Ascending aorta (tissue), 2 donors: ENCODE measurements at regions of chr15 and their contacts with region 1.

Region 1: GRCh38 chr15:66700802-66701421 is 1.1 kb upstream of the SMAD6 start:
- DNase-seq: peak; percentile 89 to 98
- H3K4me3 ChIP-seq: peak overlapping the region; percentile 88
- H3K27ac ChIP-seq: peak overlapping the region; percentile 84 to 87
- H3K4me1 ChIP-seq: peaks cover 3 to 9% of the 10 kb centered on the region in 2 donors
- H3K27me3 ChIP-seq: no peaks in the 10 kb centered on the region
- CTCF ChIP-seq: no peak

Region 2: GRCh38 chr15:66566963-66567531 is 133.9 kb before region 1 on chr15:
- intact Hi-C with region 1: no loop called
- DNase-seq: peak in 1 of 2 donors; percentile 76
- H3K4me3 ChIP-seq: no peak overlapping the region
- H3K27ac ChIP-seq: no peak overlapping the region
- H3K4me1 ChIP-seq: no peaks in the 10 kb centered on the region
- H3K27me3 ChIP-seq: no peaks in the 10 kb centered on the region
- CTCF ChIP-seq: peak; percentile 34 to 71 (median 61)

Region 3: DNA sequence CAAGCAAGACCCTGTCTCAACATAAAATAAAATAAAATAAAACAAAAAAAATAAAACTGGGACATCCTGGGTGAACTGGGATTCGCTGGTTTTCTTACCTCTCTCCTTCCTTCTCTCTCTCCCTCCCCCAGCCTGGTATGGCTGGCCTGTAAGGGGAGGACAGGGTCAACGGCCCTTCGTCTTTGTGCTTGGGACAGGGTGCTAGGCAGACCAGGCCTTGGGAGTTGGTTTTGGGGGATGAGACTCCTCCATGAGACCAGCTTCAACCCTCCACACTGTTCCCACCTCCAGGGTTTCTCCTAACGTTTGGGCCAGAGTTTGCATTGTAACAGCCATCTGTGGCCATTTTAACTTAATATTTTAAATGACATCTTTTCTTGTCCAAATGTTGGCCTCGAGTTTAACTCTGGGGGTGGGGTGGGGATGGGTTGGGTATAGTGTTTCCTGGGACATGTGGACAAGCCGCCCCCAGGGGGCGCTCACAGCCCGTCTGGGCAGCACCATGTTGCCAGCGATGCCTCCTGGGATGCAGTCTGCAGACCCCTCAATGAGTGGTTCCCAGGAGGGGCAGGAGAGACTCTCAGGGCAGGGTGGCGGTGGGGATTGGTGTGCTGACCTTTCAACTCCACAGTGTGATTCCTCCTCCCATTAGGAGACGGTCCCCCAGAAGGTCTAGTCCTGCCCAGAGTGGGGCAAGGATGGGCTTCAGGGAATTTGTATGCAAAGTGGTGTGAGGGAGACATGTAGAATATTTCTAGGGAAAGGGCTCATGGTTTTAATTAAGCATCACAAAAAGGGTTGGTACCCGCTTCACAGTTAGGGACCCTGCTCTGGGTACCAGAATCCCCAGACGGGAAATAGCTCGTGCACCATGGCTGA is 97.4 kb before region 1 on chr15:
- intact Hi-C with region 1: loop called (anchors 2 kb)
- DNase-seq: peak in 1 of 2 donors; percentile 75
- H3K4me3 ChIP-seq: no peak overlapping the region
- H3K27ac ChIP-seq: no peak overlapping the region
- H3K4me1 ChIP-seq: peaks cover 0 to 3% of the 10 kb centered on the region in 2 donors
- H3K27me3 ChIP-seq: no peaks in the 10 kb centered on the region
- CTCF ChIP-seq: peak; percentile 78 to 90 (median 80)

Region 4: GRCh38 chr15:66720206-66721006 is 19.5 kb after region 1 on chr15:
- intact Hi-C with region 1: loop called (anchors 2 kb)
- DNase-seq: peak; percentile 71 to 94
- H3K4me3 ChIP-seq: no peak overlapping the region
- H3K27ac ChIP-seq: peak overlapping the region; percentile 88 to 96
- H3K4me1 ChIP-seq: peaks cover 25 to 56% of the 10 kb centered on the region in 2 donors
- H3K27me3 ChIP-seq: no peaks in the 10 kb centered on the region
- CTCF ChIP-seq: no peak

Region 5: DNA sequence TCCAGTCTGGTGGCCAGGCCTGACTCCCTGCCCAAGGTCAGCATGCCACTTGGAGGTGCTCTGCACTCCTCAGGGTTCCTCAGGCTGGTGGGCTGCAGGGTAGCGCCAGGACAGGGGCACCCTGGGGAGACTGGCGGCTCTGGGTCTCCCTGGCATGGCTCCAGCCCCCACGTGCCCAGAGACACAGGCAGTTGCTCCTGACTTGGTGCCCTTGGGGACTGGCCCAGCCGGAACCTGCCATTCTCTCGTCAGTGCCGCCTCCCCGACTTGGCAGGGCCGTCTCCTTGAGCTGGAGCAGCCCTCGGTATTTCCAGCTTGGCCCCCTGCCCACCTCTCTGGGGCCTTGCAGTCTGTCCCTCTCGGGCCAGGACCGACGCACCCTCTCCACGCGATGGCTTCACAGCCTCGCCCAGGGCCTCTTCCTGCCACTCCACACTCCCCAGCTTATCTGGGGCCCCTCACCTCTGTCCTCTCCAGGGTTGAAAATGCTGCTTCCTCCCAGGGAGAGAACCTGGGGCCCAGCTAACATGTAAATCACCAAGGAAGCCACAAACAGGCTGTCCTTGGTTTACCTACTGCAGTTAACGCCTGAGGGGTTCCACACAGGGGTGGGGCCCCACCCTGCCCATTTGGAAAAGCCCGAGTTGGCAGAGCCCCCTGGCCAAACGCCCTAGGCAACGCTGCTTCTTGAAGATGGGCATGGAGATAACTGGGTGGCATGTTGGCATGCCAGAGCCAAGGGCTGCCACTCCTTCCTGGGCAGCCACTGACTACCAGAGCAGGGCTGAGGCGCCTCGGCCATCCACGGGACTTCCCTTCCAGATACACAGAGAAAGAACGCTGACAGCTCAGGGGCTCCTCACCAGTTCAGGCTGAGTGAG is 62.5 kb after region 1 on chr15:
- intact Hi-C with region 1: loop called (anchors 2 kb)
- DNase-seq: peak; percentile 63 to 96
- H3K4me3 ChIP-seq: no peak overlapping the region
- H3K27ac ChIP-seq: peak overlapping the region; percentile 76 to 95
- H3K4me1 ChIP-seq: peaks cover 33 to 78% of the 10 kb centered on the region in 2 donors
- H3K27me3 ChIP-seq: no peaks in the 10 kb centered on the region
- CTCF ChIP-seq: no peak

Region 6: DNA sequence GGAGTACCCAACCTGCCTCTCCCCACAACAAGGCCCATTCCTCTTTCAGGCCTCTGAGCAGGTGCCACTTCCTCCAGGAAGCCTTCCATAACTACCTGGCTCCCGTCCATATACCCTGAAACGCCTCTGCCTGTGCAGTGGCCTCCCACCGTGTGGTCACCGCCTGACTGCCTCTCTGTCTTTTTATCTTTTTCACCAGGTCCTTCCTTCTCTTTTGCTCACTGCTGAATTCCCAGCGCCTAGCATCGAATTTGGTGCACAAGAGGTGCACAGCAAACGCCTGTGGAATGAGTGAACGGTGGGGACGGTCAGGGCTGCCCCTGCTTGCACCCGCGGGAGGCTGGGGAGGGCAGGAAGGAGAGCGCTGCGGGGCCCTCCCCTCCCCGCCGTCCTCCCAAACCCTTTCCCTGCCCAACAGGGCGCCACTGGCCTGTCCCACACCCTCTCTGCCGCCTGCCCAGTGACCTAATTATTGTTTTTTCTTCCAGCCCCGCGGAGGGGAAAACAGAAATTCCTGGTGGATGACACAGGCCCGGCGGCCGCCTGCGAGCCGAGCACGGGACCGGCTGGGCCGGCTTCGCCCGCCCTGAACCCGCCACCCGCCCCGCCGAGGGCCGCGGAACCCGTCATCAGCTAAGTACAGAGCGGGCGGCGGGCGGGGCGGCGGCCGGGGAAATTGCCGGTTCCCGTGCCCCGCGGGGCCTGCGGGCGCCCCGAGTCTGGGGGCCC is 141.2 kb after region 1 on chr15:
- intact Hi-C with region 1: loop called (anchors 2 kb)
- DNase-seq: peak; percentile 79 to 96
- H3K4me3 ChIP-seq: peak overlapping the region; percentile 57 to 60
- H3K27ac ChIP-seq: peak overlapping the region; percentile 89 to 95
- H3K4me1 ChIP-seq: peaks cover 21 to 40% of the 10 kb centered on the region in 2 donors
- H3K27me3 ChIP-seq: no peaks in the 10 kb centered on the region
- CTCF ChIP-seq: no peak

Region 7: DNA sequence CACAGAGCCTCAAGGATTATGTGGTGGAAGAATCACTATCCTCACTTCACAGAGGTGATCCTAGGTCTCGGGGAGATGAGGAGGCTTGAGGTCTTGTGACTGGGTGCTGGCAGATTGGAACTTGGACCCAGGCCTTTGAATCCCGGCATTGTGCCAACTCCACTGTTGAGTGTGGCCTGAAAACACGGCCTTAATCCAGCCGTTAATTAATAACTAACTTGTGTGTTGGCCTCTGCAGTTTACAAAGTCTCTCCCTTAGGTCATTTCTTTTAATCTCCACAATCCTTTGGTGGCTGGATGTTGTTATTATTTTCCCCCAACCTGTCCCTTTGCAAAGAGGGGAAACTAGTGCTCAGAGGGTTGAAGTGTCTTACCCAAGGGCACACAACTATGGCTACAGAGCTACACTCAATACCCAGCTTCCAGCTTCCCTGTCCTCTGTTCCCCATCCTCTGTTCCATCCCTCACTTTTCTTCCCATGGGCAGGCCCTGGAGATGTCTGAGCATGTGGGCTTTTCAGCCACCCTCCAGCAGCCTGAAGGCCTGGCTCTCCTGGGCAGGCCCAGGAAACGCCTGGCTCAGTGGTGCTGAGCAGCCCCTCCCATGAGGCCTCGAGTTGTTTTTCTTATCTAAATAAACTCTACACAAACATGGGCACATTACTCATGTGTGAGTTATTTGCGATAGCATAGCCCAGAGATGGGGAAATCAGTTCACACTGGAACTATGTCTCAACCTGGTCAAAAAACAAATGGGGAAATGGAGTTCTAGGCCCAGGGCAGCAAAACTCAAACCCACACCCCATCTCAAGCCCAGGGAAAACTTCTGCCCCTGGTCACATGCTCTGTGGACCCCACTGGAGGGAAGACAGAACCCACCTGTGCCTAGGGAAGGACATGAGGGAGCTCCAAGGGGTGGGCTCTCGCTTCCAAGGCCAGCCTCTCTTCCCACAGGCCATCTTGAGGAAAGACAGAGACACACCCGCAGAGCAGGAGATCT is 347.7 kb after region 1 on chr15:
- intact Hi-C with region 1: loop called (anchors 10 kb)
- DNase-seq: peak; percentile 40 to 91
- H3K4me3 ChIP-seq: no peak overlapping the region
- H3K27ac ChIP-seq: peak overlapping the region; percentile 94 to 95
- H3K4me1 ChIP-seq: peaks cover 12 to 66% of the 10 kb centered on the region in 2 donors
- H3K27me3 ChIP-seq: no peaks in the 10 kb centered on the region
- CTCF ChIP-seq: no peak